Esophagus squamous epithelium (tissue), 5 donors: ENCODE measurements at regions of chr11 and their contacts with region 1.

Region 1: DNA sequence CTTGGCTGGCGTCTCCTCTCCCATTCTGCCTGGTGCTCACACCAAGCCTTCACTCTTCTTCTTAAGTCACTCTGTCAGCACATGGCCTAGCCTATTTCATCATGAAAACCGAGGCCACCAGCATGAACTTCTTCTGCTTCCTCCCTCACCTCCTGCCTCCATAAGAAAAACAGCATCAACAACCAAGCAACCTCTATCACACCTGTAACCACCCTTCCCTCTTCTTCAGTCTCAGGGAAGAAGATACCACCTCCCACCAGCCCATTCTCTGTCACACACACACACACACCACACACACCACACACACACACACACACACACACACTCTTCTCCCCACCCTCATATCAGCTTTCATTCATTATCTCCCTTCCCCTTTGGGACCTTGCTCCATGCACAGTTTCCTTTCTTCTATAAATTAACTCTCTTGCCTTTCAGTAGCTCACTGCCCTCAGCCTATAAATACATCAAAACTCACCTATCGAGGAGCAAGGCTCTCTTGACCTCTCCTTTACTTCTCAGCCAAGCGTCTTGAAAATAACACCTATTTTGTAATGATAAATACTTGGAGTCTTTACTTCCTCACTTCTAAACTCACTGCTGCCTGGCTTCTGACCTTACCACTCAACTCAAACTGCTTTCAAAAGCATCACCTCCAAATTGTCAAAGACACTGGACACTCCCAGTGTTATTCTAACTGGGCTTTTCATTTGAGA is 36.6 kb downstream of the SC5D start:
- DNase-seq: no peak
- H3K4me3 ChIP-seq: no peak overlapping the region
- H3K27ac ChIP-seq: no peak overlapping the region
- H3K4me1 ChIP-seq: no peaks in the 10 kb centered on the region
- H3K27me3 ChIP-seq: peaks cover 0 to 24% (median 0%) of the 10 kb centered on the region in 4 donors
- CTCF ChIP-seq: no peak
- POLR2A ChIP-seq: no peak

Region 2: GRCh38 chr11:121591405-121592033 is 262.4 kb after region 1 on chr11:
- intact Hi-C with region 1: loop called (anchors 5 kb)
- DNase-seq: no peak
- H3K4me3 ChIP-seq: no peak overlapping the region
- H3K27ac ChIP-seq: no peak overlapping the region
- H3K4me1 ChIP-seq: peaks cover 0 to 23% (median 9%) of the 10 kb centered on the region in 3 donors
- H3K27me3 ChIP-seq: no peaks in the 10 kb centered on the region
- CTCF ChIP-seq: peak; percentile 72 to 89 (median 87)
- POLR2A ChIP-seq: no peak